A673 (cell line): ENCODE measurements at regions of chr12 and their contacts with region 1.

Region 1: GRCh38 chr12:99386907-99387306 is 260.6 kb upstream of the GARIN6 start:
- DNase-seq: peak; percentile 71
- H3K4me3 ChIP-seq: no peak overlapping the region
- H3K27ac ChIP-seq: no peak overlapping the region
- H3K4me1 ChIP-seq: no peaks in the 10 kb centered on the region
- H3K27me3 ChIP-seq: peaks cover 3% of the 10 kb centered on the region
- CTCF ChIP-seq: peak; percentile 65

Region 2: DNA sequence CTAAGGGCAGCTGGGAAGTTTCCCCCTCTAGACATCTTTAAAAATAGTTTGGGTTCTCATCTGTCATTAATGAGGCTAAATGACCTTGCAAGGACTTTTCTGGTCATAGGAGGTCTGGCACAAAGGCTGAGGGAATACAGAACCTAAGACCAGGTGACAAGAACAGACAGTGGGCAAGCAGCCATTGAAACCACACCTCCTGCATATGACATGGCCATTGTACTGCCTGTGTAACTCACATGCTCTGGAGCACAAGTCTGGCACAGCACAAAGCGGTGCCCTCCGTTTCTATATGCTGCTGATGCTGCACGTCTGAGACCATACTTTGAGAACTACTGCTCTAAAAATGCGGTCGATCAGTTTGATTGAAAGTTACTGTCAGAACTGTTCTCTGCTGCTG is 598.5 kb before region 1 on chr12:
- CTCF ChIA-PET with region 1: no interaction called
- POLR2A ChIA-PET with region 1: no interaction called
- intact Hi-C with region 1: no loop called
- DNase-seq: no peak
- H3K4me3 ChIP-seq: no peak overlapping the region
- H3K27ac ChIP-seq: no peak overlapping the region
- H3K4me1 ChIP-seq: no peaks in the 10 kb centered on the region
- H3K27me3 ChIP-seq: no peaks in the 10 kb centered on the region
- CTCF ChIP-seq: no peak

Region 3: GRCh38 chr12:99619389-99620158 is 232.7 kb after region 1 on chr12:
- CTCF ChIA-PET with region 1: interaction called, 4 read pairs
- POLR2A ChIA-PET with region 1: no interaction called
- intact Hi-C with region 1: loop called (anchors 2 kb)
- DNase-seq: peak; percentile 61
- H3K4me3 ChIP-seq: no peak overlapping the region
- H3K27ac ChIP-seq: no peak overlapping the region
- H3K4me1 ChIP-seq: no peaks in the 10 kb centered on the region
- H3K27me3 ChIP-seq: no peaks in the 10 kb centered on the region
- CTCF ChIP-seq: peak; percentile 87

Region 4: DNA sequence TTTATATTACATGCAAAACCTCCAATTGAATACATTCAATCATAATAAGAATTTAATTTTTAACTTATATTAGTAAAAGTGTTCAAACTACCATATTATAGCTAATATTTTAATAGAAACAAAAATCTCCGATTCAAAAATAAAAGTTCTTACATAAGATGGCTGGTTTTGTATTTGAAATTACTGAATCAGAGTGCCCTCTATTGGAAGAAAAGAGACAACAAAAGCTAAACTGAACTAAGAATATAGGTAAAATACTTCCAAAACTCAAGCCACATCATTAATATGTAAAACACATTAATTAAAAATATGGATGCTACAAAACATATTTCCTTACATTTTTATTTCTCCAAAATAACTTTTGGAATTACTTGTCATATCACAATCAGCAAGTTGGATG is 380.9 kb after region 1 on chr12:
- CTCF ChIA-PET with region 1: no interaction called
- POLR2A ChIA-PET with region 1: no interaction called
- intact Hi-C with region 1: loop called (anchors 2 kb)
- DNase-seq: peak; percentile 36
- H3K4me3 ChIP-seq: no peak overlapping the region
- H3K27ac ChIP-seq: no peak overlapping the region
- H3K4me1 ChIP-seq: no peaks in the 10 kb centered on the region
- H3K27me3 ChIP-seq: peaks cover 25% of the 10 kb centered on the region
- CTCF ChIP-seq: peak; percentile 64